ENCODE measurements at regions of chr1 and their contacts with region 1.

Region 1: DNA sequence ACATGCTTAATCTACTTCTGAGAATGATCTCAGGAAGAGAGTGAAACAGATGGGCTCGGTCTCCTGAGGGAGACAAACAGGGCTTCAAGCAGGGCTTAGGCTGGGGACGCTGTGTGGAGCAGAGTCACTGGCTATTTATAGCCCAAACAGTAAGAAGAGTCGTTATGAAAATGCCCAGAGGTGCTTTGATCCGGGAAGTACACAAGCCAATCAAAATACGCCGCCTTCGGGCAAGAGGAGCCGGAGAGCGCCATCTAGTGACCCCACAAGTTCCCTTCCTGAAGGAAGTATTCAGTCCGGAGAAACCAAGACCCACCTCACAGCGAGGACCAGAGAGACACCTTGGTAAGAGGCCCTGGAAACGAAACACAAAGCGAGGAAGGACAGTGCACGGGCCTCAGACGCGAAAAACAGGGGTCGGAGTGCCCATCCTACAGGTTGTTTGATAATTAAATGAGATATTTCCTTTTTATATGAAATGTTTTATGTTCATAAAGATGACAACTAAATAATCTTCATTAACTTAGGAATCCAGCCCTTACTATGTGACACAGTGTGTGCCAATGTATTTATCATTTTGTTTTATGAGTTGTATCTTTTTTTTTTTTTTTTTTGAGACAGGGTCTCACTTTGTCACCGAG is 25.0 kb upstream of the SCCPDH start:
- DNase-seq: peak; percentile 81 to 85
- H3K4me3 ChIP-seq: peak overlapping the region in 1 of 3 donors; percentile 4
- H3K27ac ChIP-seq: peak overlapping the region in 2 of 3 donors; percentile 35 to 42
- H3K4me1 ChIP-seq: peaks cover 0 to 7% of the 10 kb centered on the region in 2 donors
- H3K27me3 ChIP-seq: no peaks in the 10 kb centered on the region
- CTCF ChIP-seq: peak; percentile 70 to 88 (median 76)
- POLR2A ChIP-seq: peak in 1 of 2 donors; percentile 11

Region 2: GRCh38 chr1:246364415-246364941 is 334.7 kb before region 1 on chr1:
- intact Hi-C with region 1: no loop called
- DNase-seq: no peak
- H3K4me3 ChIP-seq: no peak overlapping the region
- H3K27ac ChIP-seq: no peak overlapping the region
- H3K4me1 ChIP-seq: no peaks in the 10 kb centered on the region
- H3K27me3 ChIP-seq: no peaks in the 10 kb centered on the region
- CTCF ChIP-seq: no peak
- POLR2A ChIP-seq: no peak

Region 3: DNA sequence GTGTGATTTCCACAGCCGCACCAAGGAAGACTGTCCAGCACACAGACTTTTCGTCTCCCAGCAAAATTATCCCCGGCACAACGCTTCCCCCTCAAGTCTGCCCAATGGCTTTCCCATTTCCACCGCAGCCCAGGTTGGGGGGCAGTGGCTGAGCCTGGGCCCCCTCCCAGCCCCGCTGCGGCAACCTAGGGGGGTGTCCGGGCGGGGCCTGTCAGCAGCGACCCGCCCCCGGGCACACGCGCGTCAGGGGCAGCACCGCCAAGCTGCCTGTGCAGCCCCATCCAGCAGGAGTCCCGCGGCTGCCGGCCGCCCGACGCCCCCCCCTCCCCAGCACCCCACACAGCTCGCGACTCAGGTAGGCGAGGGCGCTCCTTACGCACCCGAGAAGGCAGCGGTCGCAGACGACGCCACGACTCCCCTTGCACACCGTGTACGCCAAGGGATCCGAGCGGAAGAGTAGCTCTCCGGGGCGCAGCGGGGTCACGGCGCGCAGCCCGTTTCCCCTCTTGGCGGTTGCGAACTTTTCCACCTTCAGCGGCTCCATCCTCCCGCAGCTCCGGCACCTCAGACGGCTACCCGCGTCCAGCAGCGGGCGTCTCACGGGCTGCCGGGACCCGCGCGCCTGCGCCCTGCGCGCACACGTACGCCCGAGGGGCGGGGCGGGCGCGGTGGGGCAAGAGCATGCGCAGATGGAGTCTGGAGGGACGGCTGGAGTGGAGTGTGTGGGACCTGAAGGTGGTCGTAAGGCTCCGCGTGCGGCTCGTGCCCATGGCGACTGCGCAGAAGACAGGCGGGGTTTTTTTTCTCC is 192.3 kb before region 1 on chr1 and contains the start of gene SMYD3:
- intact Hi-C with region 1: loop called (anchors 5 kb)
- DNase-seq: peak; percentile 72 to 73
- H3K4me3 ChIP-seq: peak within 1 kb of the TSS; percentile 51 to 85 (median 82)
- H3K27ac ChIP-seq: peak within 1 kb of the TSS in 2 of 3 donors; percentile 37 to 41
- H3K4me1 ChIP-seq: peaks cover 8% of the 10 kb centered on the region in 2 donors
- H3K27me3 ChIP-seq: no peaks in the 10 kb centered on the region
- CTCF ChIP-seq: peak in 2 of 6 experiments; percentile 14 to 30
- POLR2A ChIP-seq: peak in 1 of 2 donors; percentile 75
- total RNA-seq, gene SMYD3: 33.7 to 105 (median 51.4) TPM

Region 4: DNA sequence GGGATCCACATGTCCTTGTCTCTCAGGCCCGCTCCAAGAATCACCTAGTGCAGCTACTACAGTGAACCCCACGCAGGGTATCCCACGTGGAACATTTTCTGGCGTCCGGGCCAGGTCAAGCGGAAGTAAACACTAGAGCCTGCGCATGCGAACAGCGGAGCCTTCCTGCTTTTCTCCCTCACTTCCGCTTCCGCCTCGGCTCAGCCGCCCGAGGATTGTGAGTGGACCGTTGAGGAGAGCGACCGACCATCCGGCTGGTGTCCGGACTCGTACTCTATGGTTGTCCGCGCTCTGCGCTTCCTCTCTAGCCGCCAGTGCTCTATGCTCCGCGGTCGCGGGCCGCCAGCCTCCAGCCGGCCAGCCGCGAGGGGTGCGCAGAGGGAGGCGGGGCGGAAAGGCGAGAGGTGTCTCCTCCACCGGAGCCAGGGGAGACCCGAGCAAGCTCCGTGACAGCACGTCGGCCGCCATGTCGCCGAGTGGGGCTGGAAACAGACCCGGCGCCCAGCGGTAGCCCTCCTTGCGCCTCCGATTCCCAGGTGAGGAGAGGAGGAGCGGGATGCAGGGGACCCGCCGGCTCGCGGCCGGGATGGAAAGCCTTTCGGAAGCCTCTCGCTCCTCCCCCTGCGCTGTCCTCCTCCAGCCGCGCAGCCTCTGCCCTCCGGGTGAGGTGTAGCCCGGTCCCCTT is 132.9 kb before region 1 on chr1 and contains the starts of genes CNST and TFB2M:
- intact Hi-C with region 1: loop called (anchors 10 kb)
- DNase-seq: peak; percentile 98 to 99
- H3K4me3 ChIP-seq: peak within 1 kb of the TSS; percentile 82 to 98 (median 84)
- H3K27ac ChIP-seq: peak within 1 kb of the TSS; percentile 70 to 97 (median 96)
- H3K4me1 ChIP-seq: peaks cover 36 to 37% of the 10 kb centered on the region in 2 donors
- H3K27me3 ChIP-seq: no peaks in the 10 kb centered on the region
- CTCF ChIP-seq: peak in 1 of 6 experiments; percentile 16
- POLR2A ChIP-seq: peak; percentile 80 to 93
- total RNA-seq, gene CNST: 38.8 to 49.5 (median 41.7) TPM
- total RNA-seq, gene TFB2M: 12.2 to 21.9 (median 15.9) TPM

Region 5: GRCh38 chr1:246753670-246754535 is 54.7 kb after region 1 on chr1:
- intact Hi-C with region 1: loop called (anchors 5 kb)
- DNase-seq: peak; percentile 46 to 52
- H3K4me3 ChIP-seq: no peak overlapping the region
- H3K27ac ChIP-seq: no peak overlapping the region
- H3K4me1 ChIP-seq: no peaks in the 10 kb centered on the region
- H3K27me3 ChIP-seq: no peaks in the 10 kb centered on the region
- CTCF ChIP-seq: peak; percentile 13 to 85 (median 68)
- POLR2A ChIP-seq: no peak

Measured in thyroid gland (tissue), 4 donors.